ENCODE measurements at regions of chr2 and their contacts with region 1.

Region 1: DNA sequence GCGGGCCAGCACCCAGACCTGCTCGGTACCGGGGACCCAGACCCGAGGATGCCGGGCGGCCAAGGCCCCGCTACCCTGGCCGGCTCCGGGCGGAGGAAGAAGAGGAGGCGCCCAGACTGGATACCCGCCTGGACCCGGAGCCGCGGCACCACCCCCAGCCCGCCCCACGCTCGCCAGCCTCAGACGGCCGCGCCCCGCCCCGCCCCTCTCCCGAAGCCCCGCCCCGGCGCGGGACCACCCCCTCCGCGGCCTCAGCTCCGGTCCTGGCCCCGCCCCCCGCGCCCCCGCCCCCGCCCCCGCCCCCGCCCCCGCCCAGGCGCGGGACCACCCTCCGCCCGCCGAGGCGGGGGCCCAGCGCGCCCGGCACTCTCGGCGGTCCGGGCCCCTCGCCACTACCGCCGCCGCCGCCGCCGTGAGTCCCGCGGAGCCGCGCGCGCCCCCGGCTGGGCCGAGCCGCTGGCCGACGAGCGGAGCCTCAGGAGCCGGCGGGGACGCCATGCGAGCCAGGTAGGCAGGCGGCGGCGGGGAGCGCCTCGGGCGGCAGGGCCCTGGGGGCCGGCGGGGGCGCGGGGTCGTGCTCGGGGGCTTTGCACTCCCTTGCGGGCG is at the start of gene SH3BP4:
- DNase-seq: peak; percentile 71
- H3K4me3 Mint-ChIP-seq: peak within 1 kb of the TSS; percentile 80
- H3K27ac Mint-ChIP-seq: peak within 1 kb of the TSS; percentile 94
- H3K4me1 Mint-ChIP-seq: peaks cover 45% of the 10 kb centered on the region
- H3K27me3 Mint-ChIP-seq: no peaks in the 10 kb centered on the region
- CTCF ChIP-seq: no peak
- total RNA-seq, gene SH3BP4: 57.6 and 59.7 TPM in 2 replicates

Region 2: GRCh38 chr2:234550511-234551107 is 401.2 kb before region 1 on chr2:
- CTCF ChIA-PET with region 1: interaction called, 3 read pairs
- POLR2A ChIA-PET with region 1: no interaction called
- intact Hi-C with region 1: loop called (anchors 2 kb)
- DNase-seq: peak; percentile 77
- H3K4me3 Mint-ChIP-seq: no peak overlapping the region
- H3K27ac Mint-ChIP-seq: no peak overlapping the region
- H3K4me1 Mint-ChIP-seq: peaks cover 5% of the 10 kb centered on the region
- H3K27me3 Mint-ChIP-seq: no peaks in the 10 kb centered on the region
- CTCF ChIP-seq: peak; percentile 90

Region 3: DNA sequence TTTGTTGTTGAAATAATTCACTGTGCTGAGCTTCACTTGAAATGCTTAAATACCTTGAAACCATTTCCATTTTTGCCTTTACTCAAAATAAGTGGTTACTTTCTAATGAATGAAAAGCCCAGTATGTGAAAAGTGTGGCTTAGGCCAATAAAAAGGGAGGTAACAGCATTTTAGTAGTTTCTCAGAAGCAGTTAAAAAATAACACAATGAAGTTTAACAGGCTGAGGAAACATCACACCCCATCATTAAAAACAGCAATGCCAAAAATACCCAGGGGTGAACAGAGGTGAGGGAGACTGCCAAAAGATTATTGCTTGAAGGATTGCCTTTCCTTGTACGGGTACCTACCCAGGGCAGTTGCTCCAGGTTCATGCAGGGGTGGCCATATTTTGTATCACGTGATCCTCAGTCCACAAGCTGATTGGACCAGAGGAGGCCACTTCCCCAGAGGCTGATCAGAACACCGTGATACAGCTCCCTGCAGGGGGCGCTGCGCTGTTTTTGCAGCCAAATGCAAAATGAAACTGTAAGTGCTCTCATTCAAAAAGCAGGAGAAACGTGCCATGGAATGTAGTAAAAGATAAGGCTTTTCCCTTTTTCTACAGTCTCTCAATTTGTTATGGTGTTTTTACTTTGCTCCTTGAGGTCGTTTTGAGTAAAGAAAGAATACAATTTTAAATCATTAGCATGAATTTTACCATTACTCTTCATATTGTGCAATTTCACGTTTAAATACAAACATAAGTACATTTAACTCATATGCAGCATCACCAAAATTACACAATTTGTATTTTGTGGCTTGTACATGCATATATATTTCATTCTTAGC is 70.1 kb before region 1 on chr2:
- CTCF ChIA-PET with region 1: interaction called, 8 read pairs
- POLR2A ChIA-PET with region 1: interaction called, 18 read pairs
- intact Hi-C with region 1: loop called (anchors 2 kb)
- DNase-seq: peak; percentile 95
- H3K4me3 Mint-ChIP-seq: peak overlapping the region; percentile 41
- H3K27ac Mint-ChIP-seq: no peak overlapping the region
- H3K4me1 Mint-ChIP-seq: peaks cover 9% of the 10 kb centered on the region
- H3K27me3 Mint-ChIP-seq: no peaks in the 10 kb centered on the region
- CTCF ChIP-seq: peak; percentile 67

Region 4: DNA sequence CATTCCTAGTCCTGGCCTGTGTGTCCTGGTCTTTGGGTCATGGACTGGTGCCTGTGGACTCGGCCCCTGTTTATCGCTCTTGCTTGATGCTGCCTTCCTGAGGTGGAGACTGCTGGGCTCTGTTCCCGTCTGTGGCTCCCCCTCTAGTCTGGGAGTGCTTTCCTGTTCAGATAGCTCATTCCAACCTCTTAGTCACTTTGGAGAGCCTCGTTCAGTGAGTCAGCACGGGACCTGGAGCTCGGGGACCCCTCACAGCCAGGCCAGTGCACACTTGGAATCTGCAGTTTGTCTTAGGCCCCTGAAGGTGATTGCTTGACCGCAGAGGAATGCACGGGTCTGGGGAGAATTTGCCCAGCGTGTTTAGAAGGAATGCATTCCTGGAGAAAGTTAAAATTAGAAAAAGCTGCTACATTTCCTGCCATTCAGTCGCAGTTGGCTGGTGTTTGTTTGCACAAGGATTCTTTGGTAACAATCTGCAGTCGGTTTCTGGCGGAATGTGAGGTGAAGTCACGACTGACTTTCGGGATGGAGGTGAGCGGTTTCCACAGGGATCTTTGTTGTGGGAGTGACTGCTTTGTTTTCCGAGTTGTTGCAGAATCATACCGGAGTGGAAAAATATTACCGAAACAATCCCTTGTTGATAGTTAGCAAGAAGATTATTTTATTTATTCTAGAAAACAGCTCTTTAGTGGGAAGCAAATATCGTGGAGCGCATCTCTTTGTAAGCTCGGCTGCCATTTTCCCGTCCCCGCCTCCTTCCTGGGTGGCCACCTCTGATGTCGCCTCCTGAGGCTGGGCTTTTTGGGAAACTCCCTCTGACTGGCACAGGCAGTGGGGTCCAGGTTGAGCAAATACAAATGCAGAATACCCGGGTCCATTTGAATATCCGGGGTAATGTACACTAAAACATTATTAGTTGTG is 29.7 kb after region 1 on chr2:
- CTCF ChIA-PET with region 1: interaction called, 5 read pairs
- POLR2A ChIA-PET with region 1: interaction called, 56 read pairs
- intact Hi-C with region 1: no loop called
- DNase-seq: peak; percentile 95
- H3K4me3 Mint-ChIP-seq: peak overlapping the region; percentile 71
- H3K27ac Mint-ChIP-seq: peak overlapping the region; percentile 90
- H3K4me1 Mint-ChIP-seq: peaks cover 45% of the 10 kb centered on the region
- H3K27me3 Mint-ChIP-seq: no peaks in the 10 kb centered on the region
- CTCF ChIP-seq: no peak

Region 5: DNA sequence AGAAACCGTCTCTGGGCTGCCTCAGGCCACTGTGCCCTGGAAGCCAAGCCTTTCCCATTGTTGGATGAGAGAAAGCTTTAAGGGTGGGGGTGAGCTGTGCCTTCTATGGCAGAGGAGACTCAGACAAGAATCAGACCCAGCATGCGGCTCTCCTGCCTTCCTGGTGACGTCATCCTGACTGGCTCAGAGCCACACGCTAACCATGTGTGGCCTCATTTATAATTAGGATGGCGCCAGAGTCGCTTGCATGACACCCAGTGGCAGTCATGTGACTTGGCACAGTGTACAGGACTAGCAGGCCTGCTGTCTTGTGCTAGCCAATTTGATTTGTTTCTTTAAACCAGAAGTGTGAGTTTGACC is 99.2 kb after region 1 on chr2:
- CTCF ChIA-PET with region 1: no interaction called
- POLR2A ChIA-PET with region 1: no interaction called
- intact Hi-C with region 1: loop called (anchors 5 kb)
- DNase-seq: peak; percentile 95
- H3K4me3 Mint-ChIP-seq: no peak overlapping the region
- H3K27ac Mint-ChIP-seq: peak overlapping the region; percentile 3
- H3K4me1 Mint-ChIP-seq: peaks cover 32% of the 10 kb centered on the region
- H3K27me3 Mint-ChIP-seq: no peaks in the 10 kb centered on the region
- CTCF ChIP-seq: peak; percentile 7

Region 6: DNA sequence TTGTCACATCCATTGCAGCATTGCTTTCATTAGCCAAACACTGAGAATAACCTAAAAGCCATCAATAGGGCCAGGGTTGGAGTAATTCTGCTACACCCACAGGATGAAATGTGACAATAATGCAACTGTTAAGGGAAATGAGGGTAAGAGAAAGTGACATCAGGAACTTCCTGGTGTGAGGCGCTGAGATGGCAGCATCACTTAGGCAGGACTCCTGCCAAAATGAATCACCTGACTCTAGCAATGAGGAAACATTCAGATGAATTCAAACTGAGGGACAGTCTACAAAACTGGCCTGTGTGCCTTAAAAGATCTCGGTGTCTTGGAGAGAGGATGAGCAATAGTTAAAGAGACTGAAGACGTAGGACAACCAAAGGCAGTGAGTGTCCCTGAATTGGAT is 426.5 kb after region 1 on chr2:
- CTCF ChIA-PET with region 1: no interaction called
- POLR2A ChIA-PET with region 1: no interaction called
- intact Hi-C with region 1: no loop called
- DNase-seq: peak; percentile 45
- H3K4me3 Mint-ChIP-seq: no peak overlapping the region
- H3K27ac Mint-ChIP-seq: no peak overlapping the region
- H3K4me1 Mint-ChIP-seq: peaks cover 7% of the 10 kb centered on the region
- H3K27me3 Mint-ChIP-seq: peaks cover 62% of the 10 kb centered on the region
- CTCF ChIP-seq: no peak